HepG2 (cell line): ENCODE measurements at regions of chr10 and their contacts with region 1.

Region 1: DNA sequence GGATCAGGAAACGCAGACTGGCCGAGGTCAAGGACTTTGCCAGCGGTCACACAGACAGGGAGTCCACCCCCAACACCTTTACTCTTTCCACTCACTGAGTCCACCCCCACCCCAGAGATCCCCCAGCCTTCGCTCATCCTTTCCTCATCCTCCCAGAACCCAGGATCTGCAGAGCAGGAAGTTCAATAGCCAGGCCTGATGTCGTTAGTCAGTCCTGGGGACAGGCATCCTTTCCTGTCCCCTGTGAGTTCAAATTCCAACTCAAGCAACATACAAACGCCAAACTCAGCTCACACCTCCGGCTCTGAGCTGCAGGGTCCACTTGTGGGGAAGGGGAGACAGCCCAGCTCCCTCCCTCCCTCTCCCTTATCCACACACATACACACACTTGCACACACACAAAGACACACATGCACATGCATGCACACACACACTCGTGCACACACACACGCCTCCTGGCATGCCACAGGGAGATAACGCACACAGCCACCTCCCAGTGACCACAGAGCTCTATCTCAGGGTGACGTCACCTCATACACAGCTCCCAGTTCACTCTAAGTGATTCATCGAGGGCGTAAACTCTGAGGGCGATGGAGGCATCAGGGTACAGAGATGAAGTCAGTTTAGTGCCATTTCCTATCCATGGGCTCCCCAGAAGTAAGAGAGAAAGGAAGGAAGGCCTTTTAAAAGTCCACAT is 23.9 kb downstream of the CALML3 start:
- DNase-seq: peak; percentile 95
- ATAC-seq: peak; percentile 84
- H3K4me3 ChIP-seq: peak overlapping the region; percentile 32 to 69 (median 38)
- H3K27ac ChIP-seq: peak overlapping the region; percentile 97
- H3K4me1 ChIP-seq: peaks cover 96% of the 10 kb centered on the region
- H3K27me3 ChIP-seq: no peaks in the 10 kb centered on the region; a peak in 1 of 5 replicates
- CTCF ChIP-seq: no peak
- EP300 ChIP-seq: peak in 1 of 2 experiments; percentile 13; a peak in 1 of 4 replicates
- POLR2A ChIP-seq: peak in 1 of 2 experiments; percentile 41; a peak in 2 of 4 replicates
- RAD21 ChIP-seq: peak; percentile 33; the same call in 1 of the 2 replicates

Region 2: DNA sequence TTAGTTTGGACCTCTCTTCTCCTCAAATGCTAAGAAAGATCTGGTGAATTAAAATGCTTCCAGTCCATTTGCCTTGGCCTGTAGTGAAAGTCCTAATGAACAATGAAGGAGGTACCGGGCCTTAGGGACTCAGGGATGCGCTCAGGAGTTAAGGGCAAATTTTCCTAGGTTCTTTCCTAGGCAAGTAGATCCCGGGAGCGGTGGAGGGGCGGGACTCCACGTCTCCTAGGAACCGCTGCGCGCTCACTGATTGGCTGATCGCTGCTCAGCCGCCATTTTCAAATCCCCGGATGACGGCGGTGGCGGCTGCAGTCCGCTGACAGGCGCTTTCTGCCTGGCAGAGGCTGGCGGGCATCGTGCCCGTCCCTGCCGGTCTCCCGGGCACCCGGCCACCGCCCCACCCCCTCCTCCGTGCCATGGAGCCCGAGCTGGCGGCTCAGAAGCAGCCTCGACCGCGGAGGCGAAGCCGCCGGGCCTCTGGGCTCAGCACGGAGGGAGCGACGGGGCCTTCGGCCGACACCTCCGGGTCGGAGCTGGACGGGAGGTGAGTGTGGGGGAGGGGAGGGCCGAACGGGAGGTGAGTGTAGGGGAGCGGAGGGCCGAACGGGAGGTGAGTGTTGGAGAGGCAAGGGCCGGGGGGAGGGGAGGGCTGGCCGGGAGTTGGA is 136.3 kb before region 1 on chr10 and contains the start of gene NET1:
- CTCF ChIA-PET with region 1: no interaction called
- POLR2A ChIA-PET with region 1: no interaction called
- in situ Hi-C with region 1: no loop called
- intact Hi-C with region 1: no loop called
- DNase-seq: peak; percentile 80
- ATAC-seq: peak; percentile 98
- H3K4me3 ChIP-seq: peak within 1 kb of the TSS; percentile 83 to 92 (median 83)
- H3K27ac ChIP-seq: peak within 1 kb of the TSS; percentile 75
- H3K4me1 ChIP-seq: peaks cover 30% of the 10 kb centered on the region
- H3K27me3 ChIP-seq: peaks cover 0 to 10% of the 10 kb centered on the region in 2 experiments; a peak in 1 of 5 replicates
- CTCF ChIP-seq: no peak
- EP300 ChIP-seq: no peak
- POLR2A ChIP-seq: peak; percentile 32 to 55; a peak in 2 of 4 replicates
- RAD21 ChIP-seq: no peak
- total RNA-seq, gene NET1: 65.8 and 115 TPM in 2 replicates

Region 3: GRCh38 chr10:5527331-5528200 is 21.1 kb before region 1 on chr10:
- CTCF ChIA-PET with region 1: no interaction called
- POLR2A ChIA-PET with region 1: interaction called, 48 read pairs
- in situ Hi-C with region 1: no loop called
- intact Hi-C with region 1: no loop called
- DNase-seq: peak; percentile 50
- ATAC-seq: peak; percentile 44
- H3K4me3 ChIP-seq: no peak overlapping the region
- H3K27ac ChIP-seq: peak overlapping the region; percentile 34
- H3K4me1 ChIP-seq: peaks cover 94% of the 10 kb centered on the region
- H3K27me3 ChIP-seq: no peaks in the 10 kb centered on the region
- CTCF ChIP-seq: no peak
- EP300 ChIP-seq: no peak
- POLR2A ChIP-seq: no peak
- RAD21 ChIP-seq: no peak

Region 4: GRCh38 chr10:5570007-5570655 is 21.5 kb after region 1 on chr10:
- CTCF ChIA-PET with region 1: no interaction called
- POLR2A ChIA-PET with region 1: interaction called, 21 read pairs
- in situ Hi-C with region 1: no loop called
- intact Hi-C with region 1: no loop called
- DNase-seq: no peak
- ATAC-seq: no peak
- H3K4me3 ChIP-seq: peak overlapping the region in 1 of 3 experiments; percentile 19; a peak in 1 of 6 replicates
- H3K27ac ChIP-seq: no peak overlapping the region
- H3K4me1 ChIP-seq: peaks cover 95% of the 10 kb centered on the region
- H3K27me3 ChIP-seq: no peaks in the 10 kb centered on the region
- CTCF ChIP-seq: no peak
- EP300 ChIP-seq: no peak
- POLR2A ChIP-seq: no peak
- RAD21 ChIP-seq: no peak

Region 5: DNA sequence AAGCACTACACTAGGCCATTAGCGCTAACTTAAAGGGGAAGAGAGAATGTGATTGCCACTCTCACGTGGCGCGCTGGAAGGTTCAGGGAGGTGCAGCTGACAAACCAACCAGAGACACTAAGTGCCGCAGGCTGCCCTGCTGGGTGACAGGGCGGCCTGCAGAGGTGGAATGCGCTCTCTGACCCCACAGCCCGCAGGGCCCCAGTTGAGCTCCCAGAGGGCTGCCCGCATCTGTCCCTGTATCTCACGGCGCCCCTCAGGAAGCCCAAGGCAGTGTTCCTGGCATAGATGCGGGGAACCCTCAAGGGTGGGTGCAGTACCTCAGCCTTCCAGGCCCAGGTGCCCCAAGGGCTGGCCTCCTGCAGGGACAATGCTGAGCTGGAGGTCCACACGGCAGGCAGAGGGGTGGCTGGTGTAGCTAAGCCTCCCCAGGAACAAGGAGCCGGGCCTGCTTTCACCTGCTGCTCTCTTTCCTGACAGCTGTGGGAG is 42.7 kb after region 1 on chr10:
- CTCF ChIA-PET with region 1: no interaction called
- POLR2A ChIA-PET with region 1: interaction called, 10 read pairs
- in situ Hi-C with region 1: no loop called
- intact Hi-C with region 1: no loop called
- DNase-seq: peak; percentile 63
- ATAC-seq: peak; percentile 94
- H3K4me3 ChIP-seq: peak overlapping the region; percentile 5 to 61 (median 37); a peak in 4 of 6 replicates
- H3K27ac ChIP-seq: no peak overlapping the region
- H3K4me1 ChIP-seq: peaks cover 86% of the 10 kb centered on the region
- H3K27me3 ChIP-seq: peaks cover 1 to 30% of the 10 kb centered on the region in 2 experiments; a peak in 4 of 5 replicates
- CTCF ChIP-seq: peak; percentile 29
- EP300 ChIP-seq: no peak
- POLR2A ChIP-seq: no peak
- RAD21 ChIP-seq: peak; percentile 49; the same call in 1 of the 2 replicates